ENCODE measurements at regions of chr19 and their contacts with region 1.

Region 1: DNA sequence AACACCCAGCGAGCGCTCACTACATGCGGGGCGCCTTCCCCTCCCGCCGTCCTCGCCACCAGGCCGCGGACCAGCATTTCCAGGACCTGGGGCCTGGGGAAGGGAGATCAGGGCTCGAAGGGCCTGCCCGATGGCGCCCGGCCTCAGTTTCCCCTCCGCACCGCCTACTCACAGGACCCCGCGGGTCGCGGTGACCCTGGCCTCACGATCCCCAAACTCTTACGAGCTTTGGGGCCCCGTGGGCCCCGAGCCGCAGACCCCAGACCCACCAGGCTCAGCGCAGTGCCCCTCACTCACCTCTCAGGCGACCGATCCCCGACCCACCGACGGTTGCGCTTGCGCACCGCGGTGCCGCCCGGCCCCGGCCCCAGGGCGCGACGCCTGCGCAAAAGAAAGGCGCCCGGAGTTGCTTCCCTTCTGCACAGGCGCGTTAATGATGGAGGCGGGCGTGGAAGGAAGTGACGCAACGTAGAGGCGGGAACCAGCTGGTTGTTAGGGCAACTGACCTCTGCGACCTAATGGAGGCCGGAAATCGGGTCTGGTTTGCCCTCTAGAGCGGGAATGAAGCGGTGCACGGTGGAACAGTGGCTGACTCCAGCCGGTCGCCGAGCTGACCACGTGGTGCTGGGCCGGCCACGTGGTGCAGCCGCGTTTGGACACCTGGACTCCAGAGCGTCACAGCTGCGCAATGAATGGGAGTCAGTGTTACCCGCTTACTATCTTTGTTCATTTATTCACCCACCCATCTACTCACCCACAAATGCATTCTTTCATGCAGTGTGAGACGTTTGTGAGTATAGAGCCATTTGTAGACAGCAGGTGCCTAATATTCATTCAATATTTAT is at the start of gene SGTA:
- DNase-seq: peak; percentile 90 to 99 (median 94)
- ATAC-seq: peak; percentile 87
- H3K4me3 ChIP-seq: peak within 1 kb of the TSS; percentile 95
- H3K27ac ChIP-seq: peak within 1 kb of the TSS; percentile 93
- H3K4me1 ChIP-seq: peaks cover 13 to 51% of the 10 kb centered on the region in 2 experiments; a peak in 4 of 5 replicates
- H3K27me3 ChIP-seq: no peaks in the 10 kb centered on the region
- CTCF ChIP-seq: peak; percentile 57 to 60 (median 60)
- EP300 ChIP-seq: peak; percentile 45; the same call in 1 of the 2 replicates
- POLR2A ChIP-seq: peak; percentile 80
- RAD21 ChIP-seq: no peak
- polyA plus RNA-seq, gene SGTA: 1.4 to 4.8 TPM

Region 2: DNA sequence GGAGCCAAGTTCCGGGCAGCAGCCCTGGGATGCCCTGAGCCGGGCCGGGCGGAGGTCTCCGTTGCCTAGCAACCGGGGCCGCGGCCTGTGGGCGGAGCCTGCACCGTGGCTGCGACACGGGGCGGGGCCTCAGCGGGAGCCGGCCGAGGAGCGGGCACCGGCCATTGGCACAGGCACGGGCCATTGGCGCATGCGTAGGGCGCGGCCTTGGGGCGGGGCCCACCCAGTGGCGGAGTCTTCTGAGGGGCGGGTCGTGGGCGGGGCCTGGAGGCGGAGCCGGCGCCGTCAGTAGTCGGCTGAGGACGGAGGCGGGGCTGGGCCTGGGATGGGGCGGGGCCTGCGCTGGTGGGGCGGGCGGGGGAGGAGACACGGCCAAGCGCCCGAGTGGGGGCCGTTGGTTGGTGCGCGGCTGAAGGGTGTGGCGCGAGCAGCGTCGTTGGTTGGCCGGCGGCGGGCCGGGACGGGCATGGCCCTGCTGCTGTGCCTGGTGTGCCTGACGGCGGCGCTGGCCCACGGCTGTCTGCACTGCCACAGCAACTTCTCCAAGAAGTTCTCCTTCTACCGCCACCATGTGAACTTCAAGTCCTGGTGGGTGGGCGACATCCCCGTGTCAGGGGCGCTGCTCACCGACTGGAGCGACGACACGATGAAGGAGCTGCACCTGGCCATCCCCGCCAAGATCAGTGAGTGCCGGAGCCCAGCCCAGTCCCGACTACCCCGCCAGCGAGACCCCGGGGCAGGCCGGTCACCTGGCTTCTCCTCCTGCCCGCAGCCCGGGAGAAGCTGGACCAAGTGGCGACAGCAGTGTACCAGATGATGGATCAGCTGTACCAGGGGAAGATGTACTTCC is 686.5 kb before region 1 on chr19 and contains the start of gene IZUMO4:
- CTCF ChIA-PET with region 1: no interaction called
- POLR2A ChIA-PET with region 1: no interaction called
- in situ Hi-C with region 1: no loop called
- intact Hi-C with region 1: no loop called
- DNase-seq: peak; percentile 97 to 99 (median 98)
- ATAC-seq: peak; percentile 94
- H3K4me3 ChIP-seq: peak within 1 kb of the TSS; percentile 97
- H3K27ac ChIP-seq: peak within 1 kb of the TSS; percentile 88
- H3K4me1 ChIP-seq: peaks cover 5 to 63% of the 10 kb centered on the region in 2 experiments; a peak in 4 of 5 replicates
- H3K27me3 ChIP-seq: no peaks in the 10 kb centered on the region
- CTCF ChIP-seq: peak; percentile 42 to 70 (median 66); a peak in 5 of 6 replicates
- EP300 ChIP-seq: no peak
- POLR2A ChIP-seq: no peak
- RAD21 ChIP-seq: peak in 1 of 2 experiments; percentile 27; a peak in 1 of 4 replicates
- polyA plus RNA-seq, gene IZUMO4: 0.07 to 0.13 TPM

Region 3: GRCh38 chr19:2770055-2771013 is 12.8 kb before region 1 on chr19:
- CTCF ChIA-PET with region 1: no interaction called
- POLR2A ChIA-PET with region 1: interaction called, 12 read pairs
- in situ Hi-C with region 1: no loop called
- intact Hi-C with region 1: no loop called
- DNase-seq: no peak
- ATAC-seq: no peak
- H3K4me3 ChIP-seq: no peak overlapping the region
- H3K27ac ChIP-seq: no peak overlapping the region
- H3K4me1 ChIP-seq: peaks cover 0 to 51% of the 10 kb centered on the region in 2 experiments; a peak in 3 of 5 replicates
- H3K27me3 ChIP-seq: no peaks in the 10 kb centered on the region
- CTCF ChIP-seq: no peak
- EP300 ChIP-seq: no peak
- POLR2A ChIP-seq: no peak
- RAD21 ChIP-seq: no peak